GM12878 (cell line): ENCODE measurements at regions of chr17 and their contacts with region 1.

Region 1: GRCh38 chr17:76458580-76459490 is 5.9 kb upstream of the UBE2O start:
- DNase-seq: no peak
- ATAC-seq: peak; percentile 96
- H3K4me3 ChIP-seq: no peak overlapping the region
- H3K27ac ChIP-seq: no peak overlapping the region
- H3K4me1 ChIP-seq: no peaks in the 10 kb centered on the region
- H3K27me3 ChIP-seq: no peaks in the 10 kb centered on the region
- CTCF ChIP-seq: peak; percentile 67 to 79 (median 75)
- EP300 ChIP-seq: no peak
- POLR2A ChIP-seq: no peak
- RAD21 ChIP-seq: peak; percentile 74

Region 2: DNA sequence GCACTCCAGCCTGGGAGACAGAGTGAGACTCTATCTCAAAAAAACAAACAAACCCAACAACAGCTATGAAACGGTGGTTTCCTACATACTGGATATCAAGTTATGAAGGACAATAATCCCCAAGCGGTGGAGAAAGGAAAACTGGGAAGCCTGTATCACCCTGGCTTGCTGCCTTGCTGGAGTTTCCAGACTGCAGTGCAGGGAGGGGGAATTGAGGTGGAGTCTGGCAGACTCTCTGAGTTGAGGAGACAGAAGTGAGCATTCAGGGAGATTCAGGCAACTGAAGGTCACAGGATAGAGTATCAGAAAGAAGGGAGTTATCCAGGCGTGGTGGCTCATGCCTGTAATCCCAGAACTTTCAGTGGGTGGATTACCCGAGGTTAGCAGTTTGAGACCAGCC is 162.6 kb before region 1 on chr17:
- CTCF ChIA-PET with region 1: interaction called, 13 read pairs
- POLR2A ChIA-PET with region 1: no interaction called
- RAD21 ChIA-PET with region 1: interaction called, 3 read pairs
- SMC1A ChIA-PET with region 1: no interaction called
- in situ Hi-C with region 1: no loop called
- intact Hi-C with region 1: no loop called
- DNase-seq: no peak
- ATAC-seq: no peak
- H3K4me3 ChIP-seq: no peak overlapping the region
- H3K27ac ChIP-seq: no peak overlapping the region
- H3K4me1 ChIP-seq: no peaks in the 10 kb centered on the region
- H3K27me3 ChIP-seq: no peaks in the 10 kb centered on the region
- CTCF ChIP-seq: no peak
- EP300 ChIP-seq: no peak
- POLR2A ChIP-seq: no peak
- RAD21 ChIP-seq: no peak

Region 3: GRCh38 chr17:76384222-76384986 is 74.4 kb before region 1 on chr17 and contains the start of gene SPHK1:
- CTCF ChIA-PET with region 1: interaction called, 10 read pairs
- POLR2A ChIA-PET with region 1: no interaction called
- RAD21 ChIA-PET with region 1: interaction called, 4 read pairs
- SMC1A ChIA-PET with region 1: no interaction called
- in situ Hi-C with region 1: no loop called
- intact Hi-C with region 1: no loop called
- DNase-seq: no peak
- ATAC-seq: peak; percentile 88
- H3K4me3 ChIP-seq: peak within 1 kb of the TSS; percentile 75
- H3K27ac ChIP-seq: no peak within 1 kb of the TSS
- H3K4me1 ChIP-seq: peaks cover 24% of the 10 kb centered on the region
- H3K27me3 ChIP-seq: peaks cover 2 to 6% of the 10 kb centered on the region in 2 experiments; a peak in 2 of 4 replicates
- CTCF ChIP-seq: no peak
- EP300 ChIP-seq: no peak
- POLR2A ChIP-seq: no peak
- RAD21 ChIP-seq: no peak
- polyA plus RNA-seq, gene SPHK1: not detected

Region 4: DNA sequence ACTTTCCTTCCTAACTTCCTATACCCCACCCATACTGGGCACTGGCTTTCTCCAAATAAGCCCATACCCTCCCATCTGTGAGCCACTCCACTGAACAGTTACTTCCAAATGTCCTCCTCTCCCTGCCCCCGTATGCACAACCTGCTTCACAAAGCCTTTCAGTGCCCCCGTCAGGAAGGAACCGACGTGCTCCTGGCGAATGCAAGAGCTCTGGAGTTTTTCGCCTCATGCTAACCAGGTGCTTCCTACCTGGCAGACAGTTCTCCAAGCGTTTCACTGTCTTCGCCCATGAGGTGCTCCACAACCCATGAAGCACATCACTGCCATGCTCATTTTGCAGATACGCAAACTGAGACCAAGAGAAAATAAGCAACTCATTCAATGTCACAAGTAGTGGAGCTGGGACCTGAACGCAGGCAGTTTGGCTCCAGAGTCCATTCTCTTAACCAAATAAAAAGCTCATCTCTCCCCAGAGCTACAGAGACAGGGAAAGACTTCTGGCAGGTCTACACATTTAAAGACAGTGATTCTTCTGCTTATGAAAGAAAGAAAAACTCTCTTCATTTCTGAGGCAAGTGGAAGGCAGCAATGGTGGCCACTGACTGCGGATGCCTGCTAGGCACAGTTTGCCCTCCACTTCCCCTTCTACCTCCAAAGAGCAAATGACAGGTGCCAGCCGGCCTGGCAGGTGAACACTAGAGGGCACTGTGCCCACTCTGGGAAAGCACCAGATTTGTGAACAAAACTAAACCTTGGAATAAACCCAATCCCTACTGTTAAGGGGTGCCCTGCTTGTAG is 50.6 kb before region 1 on chr17:
- CTCF ChIA-PET with region 1: interaction called, 142 read pairs
- POLR2A ChIA-PET with region 1: interaction called, 4 read pairs
- RAD21 ChIA-PET with region 1: interaction called, 55 read pairs
- SMC1A ChIA-PET with region 1: interaction called, 27 read pairs
- in situ Hi-C with region 1: no loop called
- intact Hi-C with region 1: loop called (anchors 1 kb)
- DNase-seq: no peak
- ATAC-seq: peak; percentile 91
- H3K4me3 ChIP-seq: no peak overlapping the region
- H3K27ac ChIP-seq: no peak overlapping the region
- H3K4me1 ChIP-seq: peaks cover 20% of the 10 kb centered on the region
- H3K27me3 ChIP-seq: no peaks in the 10 kb centered on the region
- CTCF ChIP-seq: peak; percentile 87 to 96 (median 91)
- EP300 ChIP-seq: no peak
- POLR2A ChIP-seq: no peak
- RAD21 ChIP-seq: peak; percentile 82

Region 5: GRCh38 chr17:76427501-76428231 is 31.2 kb before region 1 on chr17:
- CTCF ChIA-PET with region 1: interaction called, 16 read pairs
- POLR2A ChIA-PET with region 1: interaction called, 4 read pairs
- RAD21 ChIA-PET with region 1: interaction called, 7 read pairs
- SMC1A ChIA-PET with region 1: interaction called, 5 read pairs
- in situ Hi-C with region 1: no loop called
- intact Hi-C with region 1: no loop called
- DNase-seq: no peak
- ATAC-seq: peak; percentile 86
- H3K4me3 ChIP-seq: no peak overlapping the region
- H3K27ac ChIP-seq: peak overlapping the region; percentile 4; the same call in 1 of the 2 replicates
- H3K4me1 ChIP-seq: peaks cover 24% of the 10 kb centered on the region
- H3K27me3 ChIP-seq: no peaks in the 10 kb centered on the region
- CTCF ChIP-seq: no peak
- EP300 ChIP-seq: no peak
- POLR2A ChIP-seq: no peak
- RAD21 ChIP-seq: no peak

Region 6: GRCh38 chr17:76501018-76501826 is 42.4 kb after region 1 on chr17 and contains the start of gene RHBDF2:
- CTCF ChIA-PET with region 1: interaction called, 186 read pairs
- POLR2A ChIA-PET with region 1: interaction called, 6 read pairs
- RAD21 ChIA-PET with region 1: interaction called, 13 read pairs
- SMC1A ChIA-PET with region 1: interaction called, 31 read pairs
- in situ Hi-C with region 1: no loop called
- intact Hi-C with region 1: no loop called
- DNase-seq: peak; percentile 62
- ATAC-seq: peak; percentile 83
- H3K4me3 ChIP-seq: peak within 1 kb of the TSS; percentile 96
- H3K27ac ChIP-seq: peak within 1 kb of the TSS; percentile 86
- H3K4me1 ChIP-seq: peaks cover 41% of the 10 kb centered on the region
- H3K27me3 ChIP-seq: no peaks in the 10 kb centered on the region
- CTCF ChIP-seq: no peak
- EP300 ChIP-seq: no peak
- POLR2A ChIP-seq: peak; percentile 85
- RAD21 ChIP-seq: no peak
- polyA plus RNA-seq, gene RHBDF2: 0.97 to 1.1 TPM

Region 7: DNA sequence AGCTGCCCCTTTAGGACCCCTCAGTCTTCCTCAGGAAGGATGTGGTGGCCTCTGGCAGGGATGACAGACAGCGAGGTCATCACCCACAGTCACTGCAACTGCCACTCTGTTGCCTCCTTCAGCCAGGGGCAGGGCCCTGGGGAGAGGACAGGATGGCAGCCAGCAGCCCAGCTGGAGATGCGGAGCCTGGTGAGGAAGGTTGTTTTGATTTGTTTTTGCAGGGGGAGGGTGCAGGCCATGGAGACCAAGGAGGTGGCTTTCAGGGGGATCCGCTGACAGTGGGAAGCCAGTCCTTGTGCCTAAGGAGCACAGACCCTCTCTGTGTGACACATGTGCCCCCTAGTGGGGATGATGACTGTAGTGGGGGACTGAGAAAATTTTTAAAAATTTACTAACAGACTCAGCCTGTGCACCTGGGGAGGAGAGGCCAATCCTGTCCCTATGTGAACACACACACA is 88.4 kb after region 1 on chr17:
- CTCF ChIA-PET with region 1: interaction called, 4 read pairs
- POLR2A ChIA-PET with region 1: no interaction called
- RAD21 ChIA-PET with region 1: no interaction called
- SMC1A ChIA-PET with region 1: no interaction called
- in situ Hi-C with region 1: no loop called
- intact Hi-C with region 1: loop called (anchors 2 kb)
- DNase-seq: no peak
- ATAC-seq: peak; percentile 93
- H3K4me3 ChIP-seq: no peak overlapping the region
- H3K27ac ChIP-seq: no peak overlapping the region
- H3K4me1 ChIP-seq: no peaks in the 10 kb centered on the region; the same call in 1 of the 2 replicates
- H3K27me3 ChIP-seq: peaks cover 0 to 3% of the 10 kb centered on the region in 2 experiments; a peak in 3 of 4 replicates
- CTCF ChIP-seq: peak; percentile 65 to 82 (median 80)
- EP300 ChIP-seq: no peak
- POLR2A ChIP-seq: no peak
- RAD21 ChIP-seq: peak; percentile 79

Region 8: DNA sequence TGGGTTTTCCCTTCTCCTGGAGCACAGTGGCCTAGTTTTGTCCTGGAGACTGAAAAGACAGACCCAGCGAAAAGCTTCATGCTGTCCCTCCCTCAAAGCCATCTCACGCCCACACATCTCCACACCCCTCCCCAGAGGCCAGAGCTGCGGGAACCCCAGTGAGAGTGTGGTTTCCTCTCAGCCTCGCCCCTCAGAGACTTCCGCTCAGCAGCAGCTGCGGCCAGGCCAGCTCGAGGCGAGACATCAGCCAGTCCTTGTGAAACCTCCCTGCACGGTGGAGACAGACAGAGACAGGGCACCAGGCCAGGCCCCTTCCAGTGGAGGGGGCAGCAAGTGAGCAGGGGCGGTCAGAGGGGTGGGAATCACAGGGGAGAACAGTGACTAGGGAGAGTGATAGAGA is 1422.7 kb after region 1 on chr17:
- CTCF ChIA-PET with region 1: no interaction called
- POLR2A ChIA-PET with region 1: no interaction called
- RAD21 ChIA-PET with region 1: no interaction called
- SMC1A ChIA-PET with region 1: no interaction called
- in situ Hi-C with region 1: no loop called
- intact Hi-C with region 1: no loop called
- DNase-seq: peak; percentile 89
- ATAC-seq: peak; percentile 96
- H3K4me3 ChIP-seq: peak overlapping the region; percentile 4; the same call in 1 of the 2 replicates
- H3K27ac ChIP-seq: no peak overlapping the region; the same call in 1 of the 2 replicates
- H3K4me1 ChIP-seq: peaks cover 21% of the 10 kb centered on the region
- H3K27me3 ChIP-seq: no peaks in the 10 kb centered on the region; a peak in 2 of 4 replicates
- CTCF ChIP-seq: no peak
- EP300 ChIP-seq: peak; percentile 70 to 90; a peak in 3 of 4 replicates
- POLR2A ChIP-seq: no peak
- RAD21 ChIP-seq: peak; percentile 29; the same call in 1 of the 2 replicates